ENCODE measurements at regions of chr7 and their contacts with region 1.

Region 1: GRCh38 chr7:148877517-148877916 is 6.6 kb downstream of the EZH2 start:
- DNase-seq: no peak
- ATAC-seq: no peak
- H3K4me3 ChIP-seq: no peak overlapping the region
- H3K27ac ChIP-seq: no peak overlapping the region
- H3K4me1 ChIP-seq: peaks cover 0 to 8% (median 4%) of the 10 kb centered on the region in 9 donors
- H3K27me3 ChIP-seq: no peaks in the 10 kb centered on the region
- CTCF ChIP-seq: no peak

Region 2: DNA sequence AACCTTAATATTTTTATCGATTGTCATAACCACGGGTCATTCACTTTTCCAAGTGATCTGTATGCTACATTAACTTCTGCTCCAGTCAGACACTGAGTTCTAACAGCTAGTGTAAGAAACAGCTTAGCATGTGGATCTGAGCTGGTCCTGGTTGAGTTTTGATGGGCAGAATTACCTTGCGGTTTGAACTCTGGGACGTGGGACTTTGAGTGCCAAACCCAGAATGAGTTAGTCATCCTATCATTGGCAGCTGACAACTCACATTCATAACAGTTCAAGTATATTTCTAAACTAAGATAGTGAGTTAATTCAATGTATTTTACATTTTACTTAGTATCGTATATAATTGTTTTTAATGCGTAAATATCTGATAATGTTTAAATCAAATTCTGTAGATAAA is 243.8 kb before region 1 on chr7:
- intact Hi-C with region 1: no loop called
- DNase-seq: no peak
- ATAC-seq: no peak
- H3K4me3 ChIP-seq: no peak overlapping the region
- H3K27ac ChIP-seq: no peak overlapping the region
- H3K4me1 ChIP-seq: no peaks in the 10 kb centered on the region
- H3K27me3 ChIP-seq: peaks cover 0 to 7% (median 1%) of the 10 kb centered on the region in 7 donors
- CTCF ChIP-seq: no peak

Region 3: DNA sequence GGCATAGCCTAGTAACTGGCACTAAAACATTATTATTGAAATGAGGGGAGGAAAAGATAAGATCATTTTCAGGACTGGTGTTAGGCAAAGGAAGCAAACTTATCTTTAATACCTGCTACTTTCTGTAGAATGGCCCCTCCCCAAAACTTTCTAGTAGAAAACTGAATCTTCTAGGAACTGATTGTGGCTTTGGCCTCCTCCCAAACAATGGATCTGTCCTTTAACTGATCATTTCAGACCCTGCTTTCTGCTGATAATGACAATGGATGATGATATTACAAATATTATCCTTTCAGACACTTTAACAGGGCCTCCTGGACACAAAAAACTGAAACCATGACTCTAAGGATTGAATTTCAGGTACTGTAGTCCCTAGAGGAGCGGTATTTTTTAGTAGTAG is 48.6 kb before region 1 on chr7:
- intact Hi-C with region 1: loop called in 1 of 10 experiments (anchors 5 kb)
- DNase-seq: no peak
- ATAC-seq: no peak
- H3K4me3 ChIP-seq: no peak overlapping the region
- H3K27ac ChIP-seq: no peak overlapping the region
- H3K4me1 ChIP-seq: no peaks in the 10 kb centered on the region
- H3K27me3 ChIP-seq: no peaks in the 10 kb centered on the region
- CTCF ChIP-seq: no peak